ENCODE measurements at regions of chr1 and their contacts with region 1.

Region 1: DNA sequence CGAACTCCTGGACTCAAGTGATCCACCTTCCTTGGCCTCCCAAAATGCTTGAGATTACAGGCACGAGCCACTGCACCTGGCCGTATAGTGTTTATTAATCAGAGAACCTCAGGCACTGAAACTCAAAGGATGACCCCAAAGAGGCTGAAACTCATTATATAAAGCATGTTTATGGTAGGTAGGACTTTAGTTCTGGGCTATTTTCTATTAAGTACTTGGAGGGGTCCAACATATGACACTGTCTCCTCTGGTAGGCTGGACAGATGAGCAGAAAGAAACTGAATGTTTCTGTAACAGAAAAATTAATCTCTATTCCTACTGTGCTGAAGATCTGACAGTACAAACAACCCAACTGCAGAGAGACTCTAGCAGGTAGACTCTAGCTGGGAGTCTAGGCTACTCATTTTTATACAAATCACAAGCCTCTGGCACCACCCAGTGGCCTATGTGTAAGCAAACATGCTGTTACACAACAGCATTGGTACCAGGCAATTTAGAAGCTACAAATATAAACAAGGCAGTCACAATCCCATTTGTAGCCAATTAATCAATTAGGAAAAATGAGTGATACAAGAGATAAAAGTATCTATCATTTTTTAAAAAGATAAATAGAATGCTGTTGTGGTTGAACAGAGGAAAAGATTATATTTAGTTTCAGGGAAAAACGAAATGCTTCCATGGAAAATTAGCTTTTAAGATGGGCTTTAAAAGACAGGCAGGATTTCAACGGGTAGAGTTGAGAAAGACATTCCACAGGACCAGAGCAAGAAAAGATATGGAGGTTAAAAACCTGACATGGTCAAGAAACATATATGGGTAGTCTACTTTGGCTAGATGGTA is 10.4 kb downstream of the DCAF8 start:
- DNase-seq: peak; percentile 64
- H3K4me3 Mint-ChIP-seq: no peak overlapping the region
- H3K27ac Mint-ChIP-seq: no peak overlapping the region
- H3K4me1 Mint-ChIP-seq: peaks cover 6% of the 10 kb centered on the region
- H3K27me3 Mint-ChIP-seq: no peaks in the 10 kb centered on the region

Region 2: DNA sequence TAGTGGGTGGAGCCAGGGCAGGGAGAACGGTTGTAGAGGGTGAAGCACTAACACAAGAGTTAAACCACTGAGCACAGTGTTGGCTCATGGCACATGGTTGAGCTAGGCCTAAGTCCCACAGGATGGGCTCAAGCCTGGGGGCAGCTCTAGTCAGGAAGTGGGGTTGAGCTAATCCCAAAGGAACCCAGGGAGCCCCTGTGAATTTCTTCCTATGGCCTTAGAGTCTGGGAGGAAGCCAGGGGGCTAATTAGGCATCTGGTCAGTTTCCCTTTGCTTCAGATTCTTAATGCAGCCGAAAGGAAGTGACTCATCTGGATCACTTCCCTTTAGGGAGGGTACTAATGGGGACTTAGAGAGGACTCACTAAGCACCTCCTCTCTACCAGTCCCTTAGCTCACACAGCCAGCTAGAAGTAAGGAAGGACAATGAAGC is 362.1 kb before region 1 on chr1:
- CTCF ChIA-PET with region 1: no interaction called
- POLR2A ChIA-PET with region 1: no interaction called
- DNase-seq: no peak
- H3K4me3 Mint-ChIP-seq: no peak overlapping the region
- H3K27ac Mint-ChIP-seq: no peak overlapping the region
- H3K4me1 Mint-ChIP-seq: peaks cover 19% of the 10 kb centered on the region
- H3K27me3 Mint-ChIP-seq: peaks cover 5% of the 10 kb centered on the region

Region 3: GRCh38 chr1:160098852-160099561 is 152.9 kb before region 1 on chr1:
- CTCF ChIA-PET with region 1: interaction called, 27 read pairs
- POLR2A ChIA-PET with region 1: interaction called, 3 read pairs
- DNase-seq: peak; percentile 98
- H3K4me3 Mint-ChIP-seq: peak overlapping the region; percentile 69
- H3K27ac Mint-ChIP-seq: peak overlapping the region; percentile 75
- H3K4me1 Mint-ChIP-seq: peaks cover 38% of the 10 kb centered on the region
- H3K27me3 Mint-ChIP-seq: no peaks in the 10 kb centered on the region

Region 4: GRCh38 chr1:160261893-160262794 is 10.2 kb after region 1 on chr1 and contains the start of gene DCAF8:
- CTCF ChIA-PET with region 1: interaction called, 35 read pairs
- POLR2A ChIA-PET with region 1: interaction called, 40 read pairs
- DNase-seq: peak; percentile 98
- H3K4me3 Mint-ChIP-seq: peak within 1 kb of the TSS; percentile 92
- H3K27ac Mint-ChIP-seq: peak within 1 kb of the TSS; percentile 99
- H3K4me1 Mint-ChIP-seq: peaks cover 51% of the 10 kb centered on the region
- H3K27me3 Mint-ChIP-seq: no peaks in the 10 kb centered on the region
- total RNA-seq, gene DCAF8: 123 to 125 TPM

Region 5: DNA sequence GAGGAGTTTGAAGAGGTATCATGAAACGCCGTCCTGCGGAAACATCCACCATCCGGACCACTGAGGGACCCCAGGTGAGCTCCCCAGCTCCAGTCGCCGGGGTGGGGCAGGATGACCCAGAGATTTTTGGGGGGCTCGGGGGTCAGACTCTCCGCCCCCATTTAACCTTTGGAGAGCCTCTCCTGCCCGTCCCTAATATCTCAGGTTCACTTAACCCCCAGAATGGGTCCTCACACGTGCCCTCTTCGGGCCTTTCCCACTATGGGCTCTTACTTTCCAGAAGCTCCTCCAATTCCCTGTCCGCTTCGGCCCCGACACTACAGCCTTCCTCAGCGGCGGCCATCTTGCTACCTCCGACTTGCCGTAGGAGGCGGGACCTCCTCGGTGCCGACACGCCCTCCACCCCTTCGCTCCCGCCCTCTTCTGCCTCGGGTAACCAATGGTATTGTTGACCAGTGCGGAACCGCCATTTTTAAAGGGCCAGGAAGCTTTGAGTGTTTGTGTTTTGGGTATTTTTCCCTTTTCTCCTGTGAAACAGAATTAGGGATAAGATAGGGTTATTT is 33.0 kb after region 1 on chr1 and contains the start of gene PEX19:
- CTCF ChIA-PET with region 1: interaction called, 14 read pairs
- POLR2A ChIA-PET with region 1: interaction called, 11 read pairs
- DNase-seq: peak; percentile 96
- H3K4me3 Mint-ChIP-seq: peak within 1 kb of the TSS; percentile 100
- H3K27ac Mint-ChIP-seq: peak within 1 kb of the TSS; percentile 91
- H3K4me1 Mint-ChIP-seq: peaks cover 21% of the 10 kb centered on the region
- H3K27me3 Mint-ChIP-seq: no peaks in the 10 kb centered on the region
- total RNA-seq, gene PEX19: 53.8 to 60.8 TPM

Measured in activated CD4-positive, alpha-beta memory T cell treated with anti-CD3 and anti-CD28 coated beads, Interleukin-2, amount 10 ng/mL, durations not matched to agents 7 days and 5 days (primary cell).